Endothelial cell of umbilical vein (primary cell): ENCODE measurements at regions of chr20 and their contacts with region 1.

Region 1: GRCh38 chr20:25399037-25399430 is 8.4 kb upstream of the ABHD12 start:
- DNase-seq: peak; percentile 79
- H3K4me3 ChIP-seq: no peak overlapping the region
- H3K27ac ChIP-seq: no peak overlapping the region
- H3K4me1 ChIP-seq: no peaks in the 10 kb centered on the region
- H3K27me3 ChIP-seq: peaks cover 0 to 1% of the 10 kb centered on the region in 2 experiments
- CTCF ChIP-seq: peak; percentile 35
- POLR2A ChIP-seq: no peak

Region 2: GRCh38 chr20:23794841-23795240 is 1604.2 kb before region 1 on chr20:
- CTCF ChIA-PET with region 1: no interaction called
- POLR2A ChIA-PET with region 1: no interaction called
- dilution Hi-C with region 1: no loop called
- intact Hi-C with region 1: no loop called
- DNase-seq: no peak
- H3K4me3 ChIP-seq: no peak overlapping the region
- H3K27ac ChIP-seq: no peak overlapping the region
- H3K4me1 ChIP-seq: no peaks in the 10 kb centered on the region
- H3K27me3 ChIP-seq: peaks cover 3 to 5% of the 10 kb centered on the region in 2 experiments
- CTCF ChIP-seq: no peak
- POLR2A ChIP-seq: no peak

Region 3: GRCh38 chr20:25247956-25248785 is 150.9 kb before region 1 on chr20 and contains the start of gene PYGB:
- CTCF ChIA-PET with region 1: interaction called, 25 read pairs
- POLR2A ChIA-PET with region 1: no interaction called
- dilution Hi-C with region 1: no loop called
- intact Hi-C with region 1: no loop called
- DNase-seq: peak; percentile 88
- H3K4me3 ChIP-seq: peak within 1 kb of the TSS; percentile 71 to 84 (median 77)
- H3K27ac ChIP-seq: peak within 1 kb of the TSS; percentile 59
- H3K4me1 ChIP-seq: peaks cover 11% of the 10 kb centered on the region
- H3K27me3 ChIP-seq: no peaks in the 10 kb centered on the region
- CTCF ChIP-seq: no peak
- POLR2A ChIP-seq: peak; percentile 94
- total RNA-seq, gene PYGB: 57.2 and 60.2 TPM in 2 replicates

Region 4: GRCh38 chr20:25299806-25300205 is 99.2 kb before region 1 on chr20:
- CTCF ChIA-PET with region 1: interaction called, 104 read pairs
- POLR2A ChIA-PET with region 1: no interaction called
- dilution Hi-C with region 1: no loop called
- intact Hi-C with region 1: no loop called
- DNase-seq: no peak
- H3K4me3 ChIP-seq: no peak overlapping the region
- H3K27ac ChIP-seq: no peak overlapping the region
- H3K4me1 ChIP-seq: no peaks in the 10 kb centered on the region
- H3K27me3 ChIP-seq: no peaks in the 10 kb centered on the region
- CTCF ChIP-seq: no peak
- POLR2A ChIP-seq: no peak

Region 5: DNA sequence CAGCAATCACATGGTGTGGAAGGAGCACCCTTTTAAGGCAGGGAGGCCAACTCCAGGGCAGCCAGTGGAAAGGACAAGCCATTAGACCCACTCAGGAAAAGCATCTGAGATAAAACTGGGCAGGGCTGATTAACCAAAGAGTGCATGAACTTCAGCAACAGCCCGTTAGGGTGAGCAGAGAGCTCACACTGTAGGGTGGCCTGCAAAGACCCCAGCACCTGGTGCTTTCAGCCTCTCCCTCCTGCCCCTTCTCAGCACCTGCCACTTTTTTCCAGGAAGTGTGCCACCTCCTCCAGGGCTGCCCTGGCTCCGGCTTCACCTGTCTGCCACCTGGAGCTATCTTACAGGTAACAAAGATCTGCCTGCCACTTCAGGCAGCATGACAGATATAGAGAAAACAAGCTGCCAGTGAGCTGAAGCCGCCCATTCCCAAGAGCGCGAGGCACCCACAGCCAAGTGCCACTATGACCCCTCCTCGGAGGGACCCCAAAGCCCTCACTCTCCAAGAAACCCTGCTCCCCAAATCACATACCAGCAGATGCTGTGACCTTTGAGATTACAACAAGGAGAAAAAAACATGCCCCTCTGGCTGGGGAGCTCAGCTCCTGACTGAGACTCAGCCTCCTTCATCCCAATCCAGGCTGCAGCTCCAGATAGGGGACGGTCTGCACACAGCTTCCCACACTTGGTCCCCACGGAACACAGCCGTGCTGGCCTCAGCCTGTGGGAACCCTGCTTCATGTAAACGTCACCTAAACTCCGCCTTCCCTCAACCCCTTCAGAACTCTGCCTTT is 79.6 kb before region 1 on chr20:
- CTCF ChIA-PET with region 1: interaction called, 21 read pairs
- POLR2A ChIA-PET with region 1: no interaction called
- dilution Hi-C with region 1: no loop called
- intact Hi-C with region 1: no loop called
- DNase-seq: no peak
- H3K4me3 ChIP-seq: no peak overlapping the region
- H3K27ac ChIP-seq: no peak overlapping the region
- H3K4me1 ChIP-seq: no peaks in the 10 kb centered on the region
- H3K27me3 ChIP-seq: no peaks in the 10 kb centered on the region
- CTCF ChIP-seq: no peak
- POLR2A ChIP-seq: no peak

Region 6: DNA sequence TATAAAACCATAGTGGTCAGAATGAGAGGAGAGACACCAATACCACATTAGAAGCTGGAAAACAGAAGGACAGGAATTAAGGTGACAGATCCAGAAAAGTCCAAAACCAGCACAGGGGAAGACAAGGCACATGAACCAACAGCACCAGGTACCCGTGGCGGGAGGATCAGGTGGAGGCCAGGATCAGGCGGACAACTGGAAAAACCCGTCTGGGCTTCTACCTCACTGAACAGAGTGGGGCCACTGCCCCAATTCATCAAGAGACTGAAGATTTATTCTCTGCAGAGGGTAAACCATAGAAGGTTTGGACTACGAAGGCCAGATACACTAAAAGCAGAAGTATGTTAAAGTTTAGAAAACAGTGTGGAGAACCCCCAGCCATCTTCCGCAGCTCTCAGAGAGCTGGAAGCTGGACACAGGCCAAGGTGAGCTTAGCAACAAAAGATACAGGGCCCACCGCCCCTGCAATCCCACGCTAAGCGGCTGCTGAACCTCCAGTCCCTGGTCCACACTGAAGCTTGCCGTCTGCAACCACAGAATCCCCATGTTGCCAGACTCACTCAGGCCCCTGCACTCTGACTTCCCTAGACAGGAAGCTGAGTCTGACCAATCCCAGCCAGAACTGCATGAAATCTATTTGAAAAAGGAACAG is 38.3 kb before region 1 on chr20:
- CTCF ChIA-PET with region 1: interaction called, 12 read pairs
- POLR2A ChIA-PET with region 1: no interaction called
- dilution Hi-C with region 1: no loop called
- intact Hi-C with region 1: no loop called
- DNase-seq: peak; percentile 45
- H3K4me3 ChIP-seq: no peak overlapping the region
- H3K27ac ChIP-seq: peak overlapping the region; percentile 9
- H3K4me1 ChIP-seq: peaks cover 11% of the 10 kb centered on the region
- H3K27me3 ChIP-seq: no peaks in the 10 kb centered on the region
- CTCF ChIP-seq: no peak
- POLR2A ChIP-seq: no peak